Heart left ventricle (tissue), 16 donors: ENCODE measurements at regions of chr3 and their contacts with region 1.

Region 1: GRCh38 chr3:196979545-196979944 is 10.9 kb upstream of the PIGZ start:
- DNase-seq: peak in 2 of 5 donors; percentile 7 to 12
- ATAC-seq: no peak
- H3K4me3 ChIP-seq: no peak overlapping the region
- H3K27ac ChIP-seq: no peak overlapping the region
- H3K4me1 ChIP-seq: peaks cover 0 to 8% (median 0%) of the 10 kb centered on the region in 12 donors
- H3K27me3 ChIP-seq: peaks cover 0 to 5% (median 0%) of the 10 kb centered on the region in 9 donors
- CTCF ChIP-seq: no peak
- POLR2A ChIP-seq: no peak

Region 2: GRCh38 chr3:197186887-197187588 is 207.5 kb after region 1 on chr3:
- intact Hi-C with region 1: loop called in 6 of 10 experiments (anchors 2 to 10 kb)
- DNase-seq: peak in 1 of 5 donors; percentile 13
- ATAC-seq: peak; percentile 58 to 75 (median 64)
- H3K4me3 ChIP-seq: no peak overlapping the region
- H3K27ac ChIP-seq: no peak overlapping the region
- H3K4me1 ChIP-seq: peaks cover 0 to 13% (median 3%) of the 10 kb centered on the region in 12 donors
- H3K27me3 ChIP-seq: no peaks in the 10 kb centered on the region
- CTCF ChIP-seq: peak; percentile 71 to 91 (median 82)
- POLR2A ChIP-seq: no peak